Activated CD8-positive, alpha-beta T cell treated with anti-CD3 and anti-CD28 coated beads for 36 hours (primary cell): ENCODE measurements at regions of chr16 and their contacts with region 1.

Region 1: GRCh38 chr16:50326949-50327402 is 41.8 kb downstream of the BRD7 start:
- DNase-seq: peak; percentile 86
- ATAC-seq: peak; percentile 95
- H3K4me3 Mint-ChIP-seq: no peak overlapping the region
- H3K27ac Mint-ChIP-seq: peak overlapping the region; percentile 73
- H3K4me1 Mint-ChIP-seq: peaks cover 51% of the 10 kb centered on the region
- H3K27me3 Mint-ChIP-seq: no peaks in the 10 kb centered on the region
- CTCF ChIP-seq: peak; percentile 65

Region 2: GRCh38 chr16:50160495-50161164 is 166.3 kb before region 1 on chr16:
- CTCF ChIA-PET with region 1: no interaction called
- POLR2A ChIA-PET with region 1: no interaction called
- intact Hi-C with region 1: no loop called
- DNase-seq: no peak
- ATAC-seq: peak; percentile 89
- H3K4me3 Mint-ChIP-seq: peak overlapping the region; percentile 53
- H3K27ac Mint-ChIP-seq: peak overlapping the region; percentile 96
- H3K4me1 Mint-ChIP-seq: peaks cover 61% of the 10 kb centered on the region
- H3K27me3 Mint-ChIP-seq: no peaks in the 10 kb centered on the region
- CTCF ChIP-seq: no peak

Region 3: GRCh38 chr16:50313596-50314478 is 13.1 kb before region 1 on chr16:
- CTCF ChIA-PET with region 1: interaction called, 17 read pairs
- POLR2A ChIA-PET with region 1: interaction called, 6 read pairs
- intact Hi-C with region 1: no loop called
- DNase-seq: peak; percentile 66
- ATAC-seq: peak; percentile 79
- H3K4me3 Mint-ChIP-seq: no peak overlapping the region
- H3K27ac Mint-ChIP-seq: peak overlapping the region; percentile 91
- H3K4me1 Mint-ChIP-seq: peaks cover 23% of the 10 kb centered on the region
- H3K27me3 Mint-ChIP-seq: no peaks in the 10 kb centered on the region
- CTCF ChIP-seq: no peak

Region 4: GRCh38 chr16:50354629-50355456 is 27.9 kb after region 1 on chr16:
- CTCF ChIA-PET with region 1: interaction called, 266 read pairs
- POLR2A ChIA-PET with region 1: interaction called, 8 read pairs
- intact Hi-C with region 1: no loop called
- DNase-seq: no peak
- ATAC-seq: no peak
- H3K4me3 Mint-ChIP-seq: no peak overlapping the region
- H3K27ac Mint-ChIP-seq: peak overlapping the region; percentile 13
- H3K4me1 Mint-ChIP-seq: peaks cover 23% of the 10 kb centered on the region
- H3K27me3 Mint-ChIP-seq: no peaks in the 10 kb centered on the region
- CTCF ChIP-seq: peak; percentile 92

Region 5: GRCh38 chr16:50397196-50397595 is 70.2 kb after region 1 on chr16:
- CTCF ChIA-PET with region 1: interaction called, 10 read pairs
- POLR2A ChIA-PET with region 1: no interaction called
- intact Hi-C with region 1: no loop called
- DNase-seq: peak; percentile 17
- ATAC-seq: peak; percentile 42
- H3K4me3 Mint-ChIP-seq: no peak overlapping the region
- H3K27ac Mint-ChIP-seq: no peak overlapping the region
- H3K4me1 Mint-ChIP-seq: peaks cover 9% of the 10 kb centered on the region
- H3K27me3 Mint-ChIP-seq: no peaks in the 10 kb centered on the region
- CTCF ChIP-seq: no peak

Region 6: GRCh38 chr16:50741808-50742575 is 415.0 kb after region 1 on chr16 and contains the start of gene CYLD:
- CTCF ChIA-PET with region 1: interaction called, 6 read pairs
- POLR2A ChIA-PET with region 1: no interaction called
- intact Hi-C with region 1: loop called (anchors 10 kb)
- DNase-seq: peak; percentile 100
- ATAC-seq: peak; percentile 91
- H3K4me3 Mint-ChIP-seq: peak within 1 kb of the TSS; percentile 93
- H3K27ac Mint-ChIP-seq: peak within 1 kb of the TSS; percentile 97
- H3K4me1 Mint-ChIP-seq: peaks cover 38% of the 10 kb centered on the region
- H3K27me3 Mint-ChIP-seq: no peaks in the 10 kb centered on the region
- CTCF ChIP-seq: no peak
- total RNA-seq, gene CYLD: 86.4 to 94.4 TPM